Activated T-helper 2 cell treated with anti-CD3 and anti-CD28 coated beads, Interferon-gamma antibody, Interleukin-2, Interleukin-4, amounts not matched to agents 10 μg/mL and 5 μg/mL and 100 μg/mL, durations not matched to agents 14 hours and 24 hours and 36 hours (primary cell): ENCODE measurements at regions of chr3 and their contacts with region 1.

Region 1: GRCh38 chr3:11719406-11720230 is 75.9 kb upstream of the VGLL4 start:
- DNase-seq: peak; percentile 46
- H3K4me3 Mint-ChIP-seq: peak overlapping the region; percentile 90
- H3K27ac Mint-ChIP-seq: no peak overlapping the region
- H3K4me1 Mint-ChIP-seq: peaks cover 17% of the 10 kb centered on the region
- H3K27me3 Mint-ChIP-seq: peaks cover 22% of the 10 kb centered on the region

Region 2: GRCh38 chr3:11764931-11765363 is 45.3 kb after region 1 on chr3:
- intact Hi-C with region 1: loop called (anchors 1 kb)
- DNase-seq: peak; percentile 27
- H3K4me3 Mint-ChIP-seq: peak overlapping the region; percentile 13
- H3K27ac Mint-ChIP-seq: peak overlapping the region; percentile 74
- H3K4me1 Mint-ChIP-seq: peaks cover 20% of the 10 kb centered on the region
- H3K27me3 Mint-ChIP-seq: no peaks in the 10 kb centered on the region

Region 3: GRCh38 chr3:11770477-11771391 is 51.1 kb after region 1 on chr3:
- intact Hi-C with region 1: loop called (anchors 1 kb)
- DNase-seq: peak; percentile 86
- H3K4me3 Mint-ChIP-seq: no peak overlapping the region
- H3K27ac Mint-ChIP-seq: peak overlapping the region; percentile 46
- H3K4me1 Mint-ChIP-seq: peaks cover 26% of the 10 kb centered on the region
- H3K27me3 Mint-ChIP-seq: no peaks in the 10 kb centered on the region

Region 4: GRCh38 chr3:11803977-11804892 is 84.6 kb after region 1 on chr3:
- intact Hi-C with region 1: loop called (anchors 5 kb)
- DNase-seq: peak; percentile 19
- H3K4me3 Mint-ChIP-seq: no peak overlapping the region
- H3K27ac Mint-ChIP-seq: no peak overlapping the region
- H3K4me1 Mint-ChIP-seq: peaks cover 27% of the 10 kb centered on the region
- H3K27me3 Mint-ChIP-seq: no peaks in the 10 kb centered on the region

Region 5: DNA sequence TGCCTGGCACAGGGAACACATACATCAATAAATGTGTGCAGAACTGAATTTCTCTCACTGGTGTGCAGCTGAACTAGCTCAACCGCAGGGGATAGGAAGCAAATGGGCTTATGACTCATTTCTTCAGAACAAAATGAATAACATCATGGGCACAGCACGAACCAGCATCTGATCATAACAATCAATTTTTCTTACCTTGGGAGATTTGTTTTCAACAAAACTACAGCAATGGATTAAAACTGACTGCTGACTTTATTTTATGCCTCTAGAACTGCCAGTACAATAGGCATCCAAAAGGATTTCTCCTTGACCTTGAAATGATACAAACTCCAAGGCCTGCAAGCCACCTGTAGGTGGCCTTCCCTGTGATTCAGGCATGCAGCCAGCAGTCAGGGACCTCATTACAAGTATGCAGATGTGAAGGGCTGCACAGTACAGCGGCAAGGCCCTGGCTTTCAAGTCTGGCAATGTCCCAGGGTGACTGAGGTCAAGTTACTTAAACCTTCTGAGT is 101.0 kb after region 1 on chr3:
- intact Hi-C with region 1: loop called (anchors 5 kb)
- DNase-seq: peak; percentile 15
- H3K4me3 Mint-ChIP-seq: peak overlapping the region; percentile 57
- H3K27ac Mint-ChIP-seq: peak overlapping the region; percentile 47
- H3K4me1 Mint-ChIP-seq: peaks cover 34% of the 10 kb centered on the region
- H3K27me3 Mint-ChIP-seq: no peaks in the 10 kb centered on the region

Region 6: GRCh38 chr3:11846281-11847034 is 126.8 kb after region 1 on chr3 and contains the start of gene TAMM41:
- intact Hi-C with region 1: loop called (anchors 5 kb)
- DNase-seq: peak; percentile 85
- H3K4me3 Mint-ChIP-seq: peak within 1 kb of the TSS; percentile 97
- H3K27ac Mint-ChIP-seq: peak within 1 kb of the TSS; percentile 90
- H3K4me1 Mint-ChIP-seq: peaks cover 20% of the 10 kb centered on the region
- H3K27me3 Mint-ChIP-seq: peaks cover 3% of the 10 kb centered on the region
- total RNA-seq, gene TAMM41: 28.4 and 30.6 TPM in 2 replicates

Region 7: DNA sequence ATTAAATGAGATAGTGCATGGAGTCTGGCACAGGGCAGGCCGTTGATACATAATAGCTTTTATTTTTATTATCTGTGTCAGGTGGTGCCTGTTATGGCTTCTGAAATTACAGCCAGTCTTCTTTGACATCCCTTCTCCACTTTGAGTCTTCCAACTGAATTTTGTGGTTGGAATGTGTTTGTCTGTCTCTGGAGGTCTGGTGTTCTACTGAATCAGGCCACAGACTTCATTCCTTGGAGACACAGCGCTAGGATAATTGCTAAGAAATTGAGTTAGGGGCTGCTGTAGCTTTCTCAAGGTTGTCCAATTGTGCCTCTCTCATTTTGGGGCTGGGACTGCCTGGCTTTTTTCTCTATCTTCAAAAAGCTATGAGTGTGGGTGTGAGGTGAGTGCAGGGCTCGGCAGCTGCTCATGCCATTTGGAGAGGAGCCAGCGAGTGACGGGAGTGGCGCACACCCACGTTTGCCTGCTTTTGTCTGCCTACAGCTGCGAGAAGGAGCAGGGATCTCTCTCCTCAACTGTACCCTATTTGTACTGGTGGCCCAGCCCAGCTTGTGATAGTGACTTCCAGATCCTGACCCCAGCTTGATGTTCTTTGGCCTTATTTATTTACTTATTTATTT is 234.8 kb after region 1 on chr3:
- intact Hi-C with region 1: no loop called
- DNase-seq: no peak
- H3K4me3 Mint-ChIP-seq: no peak overlapping the region
- H3K27ac Mint-ChIP-seq: no peak overlapping the region
- H3K4me1 Mint-ChIP-seq: no peaks in the 10 kb centered on the region
- H3K27me3 Mint-ChIP-seq: peaks cover 4% of the 10 kb centered on the region